HepG2 (cell line): ENCODE measurements at regions of chr16 and their contacts with region 1.

Region 1: GRCh38 chr16:57277586-57277985 is 6.9 kb downstream of the PLLP start:
- DNase-seq: no peak
- ATAC-seq: no peak
- H3K4me3 ChIP-seq: no peak overlapping the region
- H3K27ac ChIP-seq: no peak overlapping the region
- H3K4me1 ChIP-seq: peaks cover 100% of the 10 kb centered on the region
- H3K27me3 ChIP-seq: no peaks in the 10 kb centered on the region
- CTCF ChIP-seq: no peak
- EP300 ChIP-seq: no peak
- POLR2A ChIP-seq: no peak
- RAD21 ChIP-seq: no peak

Region 2: DNA sequence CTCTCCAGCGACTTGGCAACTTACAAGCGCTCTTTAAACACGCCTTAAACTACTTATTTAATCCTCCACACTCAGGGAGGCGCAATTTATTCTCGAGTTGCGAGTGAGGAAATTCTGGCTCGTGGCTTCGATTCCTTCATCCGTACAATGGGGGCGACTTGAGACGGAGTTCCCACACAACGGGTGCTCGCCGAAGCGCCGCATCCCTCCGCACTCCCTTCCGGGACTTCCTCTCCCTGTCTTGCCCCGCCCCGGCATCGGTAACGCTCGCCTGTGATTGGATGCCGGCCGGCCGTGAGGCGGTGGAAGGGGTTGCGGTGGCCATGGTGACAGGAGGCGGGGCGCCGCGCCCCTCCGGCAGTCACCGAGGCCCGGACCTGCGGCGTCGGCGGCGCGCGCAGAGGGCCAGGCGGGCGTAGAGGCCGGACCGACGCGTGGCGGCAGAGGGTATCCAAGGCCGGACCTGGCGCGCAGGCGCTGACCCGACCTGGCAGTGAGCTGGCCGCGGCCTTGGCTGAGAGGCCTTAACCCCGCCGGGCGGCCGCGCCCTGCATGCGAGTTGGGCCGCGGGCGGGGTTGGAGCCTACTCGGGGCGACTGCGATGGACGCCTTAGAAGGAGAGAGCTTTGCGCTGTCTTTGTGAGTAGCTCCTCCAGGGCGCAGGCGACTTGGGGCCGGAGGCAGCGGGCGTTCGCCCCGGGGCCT is 32.7 kb before region 1 on chr16 and contains the start of gene ARL2BP:
- CTCF ChIA-PET with region 1: no interaction called
- POLR2A ChIA-PET with region 1: interaction called, 20 read pairs
- in situ Hi-C with region 1: no loop called
- intact Hi-C with region 1: loop called (anchors 1 kb)
- DNase-seq: peak; percentile 96
- ATAC-seq: peak; percentile 96
- H3K4me3 ChIP-seq: peak within 1 kb of the TSS; percentile 77 to 89 (median 81)
- H3K27ac ChIP-seq: peak within 1 kb of the TSS; percentile 91
- H3K4me1 ChIP-seq: peaks cover 40% of the 10 kb centered on the region
- H3K27me3 ChIP-seq: no peaks in the 10 kb centered on the region
- CTCF ChIP-seq: no peak; the same call in none of the 2 replicates
- EP300 ChIP-seq: 0 out of 4 replicates have a peak, but pooled peaks of 1 of the 2 experiments have one; percentile 7
- POLR2A ChIP-seq: peak; percentile 82 to 84
- RAD21 ChIP-seq: peak; percentile 79
- total RNA-seq, gene ARL2BP: 67.6 and 97.1 TPM in 2 replicates

Region 3: DNA sequence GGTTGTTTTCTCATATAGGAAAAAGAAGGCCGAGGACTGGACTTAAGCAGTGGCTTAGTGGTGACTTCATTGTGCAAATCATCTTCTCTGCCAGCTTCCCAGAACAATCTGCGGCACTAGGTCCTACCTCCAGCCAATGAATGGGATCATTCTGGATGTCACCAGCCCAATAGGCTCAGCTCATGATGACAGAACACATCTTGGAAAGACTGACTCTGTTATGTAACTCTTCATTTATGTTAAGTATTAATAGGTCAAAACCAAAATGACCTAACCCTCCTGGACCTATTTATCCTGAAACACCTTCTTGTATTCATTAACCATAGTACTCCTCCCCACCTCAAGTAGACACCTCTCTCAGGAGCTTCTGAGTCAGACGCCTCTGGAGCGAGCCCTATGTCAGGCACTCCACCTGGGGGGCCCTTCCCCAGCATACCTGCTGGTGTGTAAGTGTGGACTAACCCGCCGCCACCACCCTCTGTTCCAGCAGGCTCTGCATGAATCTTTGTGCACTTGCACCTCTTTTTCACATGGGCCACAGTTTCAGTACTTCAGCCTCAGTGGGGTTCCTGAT is 25.4 kb before region 1 on chr16:
- CTCF ChIA-PET with region 1: interaction called, 3 read pairs
- POLR2A ChIA-PET with region 1: interaction called, 20 read pairs
- in situ Hi-C with region 1: no loop called
- intact Hi-C with region 1: no loop called
- DNase-seq: peak; percentile 32
- ATAC-seq: peak; percentile 54
- H3K4me3 ChIP-seq: no peak overlapping the region
- H3K27ac ChIP-seq: no peak overlapping the region
- H3K4me1 ChIP-seq: peaks cover 32% of the 10 kb centered on the region
- H3K27me3 ChIP-seq: no peaks in the 10 kb centered on the region
- CTCF ChIP-seq: no peak
- EP300 ChIP-seq: no peak
- POLR2A ChIP-seq: no peak
- RAD21 ChIP-seq: no peak

Region 4: GRCh38 chr16:57289391-57290257 is 12.0 kb after region 1 on chr16:
- CTCF ChIA-PET with region 1: no interaction called
- POLR2A ChIA-PET with region 1: interaction called, 15 read pairs
- in situ Hi-C with region 1: no loop called
- intact Hi-C with region 1: no loop called
- DNase-seq: no peak
- ATAC-seq: peak; percentile 59
- H3K4me3 ChIP-seq: peak overlapping the region in 2 of 3 experiments; percentile 22 to 36; a peak in 1 of 6 replicates
- H3K27ac ChIP-seq: no peak overlapping the region
- H3K4me1 ChIP-seq: peaks cover 70% of the 10 kb centered on the region
- H3K27me3 ChIP-seq: peaks cover 2 to 7% of the 10 kb centered on the region in 2 experiments; a peak in 2 of 5 replicates
- CTCF ChIP-seq: no peak
- EP300 ChIP-seq: no peak
- POLR2A ChIP-seq: no peak
- RAD21 ChIP-seq: no peak

Region 5: DNA sequence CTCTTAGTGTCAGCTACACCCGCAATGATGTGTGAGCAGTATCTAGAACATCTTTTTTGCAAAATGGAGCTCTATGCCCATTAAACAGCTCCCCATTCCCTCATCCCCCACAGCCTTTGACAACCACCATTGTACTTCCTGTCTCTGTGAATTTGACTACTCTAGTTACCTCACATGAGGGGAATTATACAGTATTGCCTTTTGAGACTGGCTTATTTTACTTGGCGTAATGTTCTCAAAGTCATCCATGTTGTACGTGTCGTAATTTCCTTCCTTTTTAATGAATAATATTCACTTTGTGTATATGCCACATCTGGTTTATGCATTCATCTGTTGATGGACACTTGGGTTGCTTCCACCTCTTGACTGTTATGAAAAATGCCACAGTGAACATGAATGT is 57.8 kb after region 1 on chr16:
- CTCF ChIA-PET with region 1: no interaction called
- POLR2A ChIA-PET with region 1: no interaction called
- in situ Hi-C with region 1: no loop called
- intact Hi-C with region 1: no loop called
- DNase-seq: no peak
- ATAC-seq: no peak
- H3K4me3 ChIP-seq: no peak overlapping the region
- H3K27ac ChIP-seq: no peak overlapping the region
- H3K4me1 ChIP-seq: peaks cover 10% of the 10 kb centered on the region
- H3K27me3 ChIP-seq: peaks cover 0 to 8% of the 10 kb centered on the region in 2 experiments; a peak in 2 of 5 replicates
- CTCF ChIP-seq: no peak
- EP300 ChIP-seq: no peak
- POLR2A ChIP-seq: no peak
- RAD21 ChIP-seq: no peak